ENCODE measurements at regions of chr7 and their contacts with region 1.

Region 1: GRCh38 chr7:141737834-141738591 is at the start of gene SSBP1:
- DNase-seq: peak; percentile 95
- H3K4me3 Mint-ChIP-seq: peak within 1 kb of the TSS; percentile 90
- H3K27ac Mint-ChIP-seq: peak within 1 kb of the TSS; percentile 96
- H3K4me1 Mint-ChIP-seq: peaks cover 36% of the 10 kb centered on the region
- H3K27me3 Mint-ChIP-seq: no peaks in the 10 kb centered on the region
- total RNA-seq, gene SSBP1: 202 to 230 TPM

Region 2: GRCh38 chr7:140375892-140376730 is 1361.9 kb before region 1 on chr7:
- CTCF ChIA-PET with region 1: interaction called, 6 read pairs
- intact Hi-C with region 1: loop called (anchors 1 kb)
- DNase-seq: peak; percentile 59
- H3K4me3 Mint-ChIP-seq: peak overlapping the region; percentile 58
- H3K27ac Mint-ChIP-seq: peak overlapping the region; percentile 96
- H3K4me1 Mint-ChIP-seq: peaks cover 37% of the 10 kb centered on the region
- H3K27me3 Mint-ChIP-seq: no peaks in the 10 kb centered on the region

Region 3: DNA sequence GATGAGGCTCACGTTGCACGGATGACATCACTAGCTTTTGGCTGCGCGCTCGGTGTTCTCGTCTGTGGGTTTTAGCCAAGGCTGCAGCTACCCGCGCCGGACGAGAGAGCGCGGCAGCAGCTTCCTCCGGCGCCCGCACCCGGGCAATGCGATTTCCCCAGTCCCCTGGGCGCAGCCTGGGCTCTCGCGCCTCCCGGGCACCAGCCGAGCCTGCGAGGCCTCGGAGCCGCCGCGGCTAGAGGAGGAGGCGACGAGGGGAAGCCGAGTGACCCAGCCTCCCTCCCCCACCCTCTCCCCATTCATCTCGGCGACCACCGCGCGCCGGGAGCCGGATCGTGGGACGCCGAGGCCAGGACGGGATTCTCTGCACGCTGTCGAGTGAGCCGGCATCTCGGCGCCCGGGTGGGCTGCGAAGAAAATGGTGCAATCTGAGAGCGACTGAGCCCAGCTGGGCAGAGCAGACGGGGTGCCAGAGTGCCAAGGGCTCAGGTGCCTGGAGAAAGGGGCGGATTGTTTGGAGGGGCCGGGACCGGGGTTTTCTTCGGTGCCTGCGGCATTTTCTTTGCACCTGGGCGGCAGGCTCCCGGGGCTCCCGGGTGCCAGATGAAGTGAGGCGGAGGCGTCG is 665.4 kb before region 1 on chr7:
- CTCF ChIA-PET with region 1: no interaction called
- intact Hi-C with region 1: loop called (anchors 5 kb)
- DNase-seq: peak; percentile 54
- H3K4me3 Mint-ChIP-seq: peak overlapping the region; percentile 64
- H3K27ac Mint-ChIP-seq: no peak overlapping the region
- H3K4me1 Mint-ChIP-seq: peaks cover 15% of the 10 kb centered on the region
- H3K27me3 Mint-ChIP-seq: peaks cover 53% of the 10 kb centered on the region

Region 4: GRCh38 chr7:141563956-141564631 is 173.9 kb before region 1 on chr7:
- CTCF ChIA-PET with region 1: no interaction called
- intact Hi-C with region 1: loop called (anchors 1 kb)
- DNase-seq: peak; percentile 70
- H3K4me3 Mint-ChIP-seq: no peak overlapping the region
- H3K27ac Mint-ChIP-seq: peak overlapping the region; percentile 35
- H3K4me1 Mint-ChIP-seq: peaks cover 55% of the 10 kb centered on the region
- H3K27me3 Mint-ChIP-seq: no peaks in the 10 kb centered on the region

Region 5: GRCh38 chr7:141701489-141702046 is 36.4 kb before region 1 on chr7:
- CTCF ChIA-PET with region 1: interaction called, 7 read pairs
- intact Hi-C with region 1: loop called (anchors 1 kb)
- DNase-seq: peak; percentile 83
- H3K4me3 Mint-ChIP-seq: peak overlapping the region; percentile 76
- H3K27ac Mint-ChIP-seq: peak overlapping the region; percentile 39
- H3K4me1 Mint-ChIP-seq: peaks cover 45% of the 10 kb centered on the region
- H3K27me3 Mint-ChIP-seq: peaks cover 5% of the 10 kb centered on the region

Region 6: DNA sequence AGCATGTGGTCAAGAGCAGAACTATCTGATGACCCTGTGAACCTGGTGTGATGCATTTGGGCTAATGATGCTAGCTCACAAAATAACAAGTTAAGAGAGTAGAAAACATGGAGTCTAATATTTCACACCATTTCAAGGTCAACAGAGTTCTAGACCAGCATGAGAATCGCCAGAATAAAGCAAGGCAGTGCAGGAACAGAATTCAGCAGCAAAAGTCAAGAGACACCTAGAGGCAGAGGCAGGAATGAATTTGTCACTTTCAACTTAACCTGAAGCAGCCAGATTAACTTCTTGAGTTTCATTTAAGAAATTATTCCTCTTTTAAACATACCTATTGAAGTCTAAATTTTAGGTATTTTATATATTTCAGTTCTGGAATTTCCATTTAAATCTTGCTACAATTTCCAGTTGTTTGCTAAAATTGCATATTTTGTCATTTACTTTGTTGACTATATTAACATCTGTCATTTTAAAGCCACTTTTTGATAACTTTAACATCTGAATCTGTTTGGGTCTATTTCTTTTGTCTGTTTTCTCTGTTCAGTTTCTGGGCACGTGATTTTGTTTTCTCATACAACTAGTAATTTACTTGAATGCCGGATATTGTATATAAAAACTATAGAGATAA is 564.0 kb after region 1 on chr7:
- CTCF ChIA-PET with region 1: no interaction called
- intact Hi-C with region 1: loop called (anchors 10 kb)
- DNase-seq: no peak
- H3K4me3 Mint-ChIP-seq: no peak overlapping the region
- H3K27ac Mint-ChIP-seq: no peak overlapping the region
- H3K4me1 Mint-ChIP-seq: peaks cover 30% of the 10 kb centered on the region
- H3K27me3 Mint-ChIP-seq: peaks cover 11% of the 10 kb centered on the region

Region 7: DNA sequence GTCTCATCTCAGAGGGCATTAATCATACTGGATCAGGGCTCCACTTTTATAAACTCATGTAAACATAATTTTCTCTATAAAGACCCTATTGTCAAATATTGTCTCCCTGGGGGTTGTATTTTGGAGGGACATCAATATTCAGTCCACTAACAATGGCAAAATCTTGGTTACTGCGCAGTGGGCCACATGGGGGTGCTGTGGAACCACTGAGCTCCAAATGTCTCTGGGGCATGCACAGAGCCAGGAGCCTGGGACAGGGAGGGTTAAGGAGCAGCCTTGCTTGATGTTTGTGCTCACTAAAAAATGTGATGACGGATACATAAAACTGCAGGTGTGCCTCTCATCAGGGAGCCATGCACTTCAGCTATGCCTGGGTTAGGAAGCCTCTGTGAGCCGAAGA is 582.0 kb after region 1 on chr7:
- CTCF ChIA-PET with region 1: no interaction called
- intact Hi-C with region 1: no loop called
- DNase-seq: peak; percentile 66
- H3K4me3 Mint-ChIP-seq: peak overlapping the region; percentile 12
- H3K27ac Mint-ChIP-seq: peak overlapping the region; percentile 60
- H3K4me1 Mint-ChIP-seq: peaks cover 18% of the 10 kb centered on the region
- H3K27me3 Mint-ChIP-seq: no peaks in the 10 kb centered on the region